ENCODE measurements at regions of chr18 and their contacts with region 1.

Region 1: GRCh38 chr18:37537868-37538525 is 27.6 kb downstream of the CELF4 start:
- DNase-seq: peak; percentile 67 to 91 (median 85)
- H3K4me3 ChIP-seq: no peak overlapping the region
- H3K27ac ChIP-seq: no peak overlapping the region
- H3K4me1 ChIP-seq: no peaks in the 10 kb centered on the region
- H3K27me3 ChIP-seq: peaks cover 9% of the 10 kb centered on the region
- CTCF ChIP-seq: peak; percentile 73

Region 2: DNA sequence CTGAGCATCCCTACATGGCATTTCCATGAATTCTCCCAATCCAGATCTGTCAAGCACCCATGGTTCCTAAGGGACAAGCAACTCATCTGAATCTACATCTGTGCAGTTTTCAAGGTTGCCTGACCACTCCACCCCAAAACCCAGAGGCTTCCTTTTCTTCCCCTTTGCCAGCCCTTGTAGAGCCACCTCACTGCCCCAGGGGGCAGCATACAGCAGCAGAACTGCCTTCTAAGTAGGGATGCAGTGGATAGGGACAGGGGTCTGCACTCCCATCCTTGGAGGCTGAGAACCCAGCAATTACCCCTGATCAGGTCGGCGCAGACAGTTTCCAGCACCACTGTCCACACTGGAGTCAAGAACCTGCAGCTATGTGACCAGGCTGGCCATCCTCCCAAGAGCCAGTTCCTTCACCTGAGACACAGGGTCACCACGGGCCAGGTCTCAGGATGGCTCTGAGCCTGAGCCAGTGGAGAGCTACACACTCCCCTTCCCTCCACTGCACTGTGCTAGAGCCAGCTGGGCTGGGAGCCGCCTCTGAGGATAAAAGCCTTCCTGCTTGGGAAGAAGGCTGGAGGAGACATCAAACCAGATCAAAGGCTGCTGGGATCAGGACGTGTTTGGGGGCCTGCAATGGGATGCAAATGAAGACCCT is 255.5 kb before region 1 on chr18:
- intact Hi-C with region 1: no loop called
- DNase-seq: peak in 1 of 5 donors; percentile 31
- H3K4me3 ChIP-seq: no peak overlapping the region
- H3K27ac ChIP-seq: no peak overlapping the region
- H3K4me1 ChIP-seq: no peaks in the 10 kb centered on the region
- H3K27me3 ChIP-seq: no peaks in the 10 kb centered on the region
- CTCF ChIP-seq: peak; percentile 27

Region 3: DNA sequence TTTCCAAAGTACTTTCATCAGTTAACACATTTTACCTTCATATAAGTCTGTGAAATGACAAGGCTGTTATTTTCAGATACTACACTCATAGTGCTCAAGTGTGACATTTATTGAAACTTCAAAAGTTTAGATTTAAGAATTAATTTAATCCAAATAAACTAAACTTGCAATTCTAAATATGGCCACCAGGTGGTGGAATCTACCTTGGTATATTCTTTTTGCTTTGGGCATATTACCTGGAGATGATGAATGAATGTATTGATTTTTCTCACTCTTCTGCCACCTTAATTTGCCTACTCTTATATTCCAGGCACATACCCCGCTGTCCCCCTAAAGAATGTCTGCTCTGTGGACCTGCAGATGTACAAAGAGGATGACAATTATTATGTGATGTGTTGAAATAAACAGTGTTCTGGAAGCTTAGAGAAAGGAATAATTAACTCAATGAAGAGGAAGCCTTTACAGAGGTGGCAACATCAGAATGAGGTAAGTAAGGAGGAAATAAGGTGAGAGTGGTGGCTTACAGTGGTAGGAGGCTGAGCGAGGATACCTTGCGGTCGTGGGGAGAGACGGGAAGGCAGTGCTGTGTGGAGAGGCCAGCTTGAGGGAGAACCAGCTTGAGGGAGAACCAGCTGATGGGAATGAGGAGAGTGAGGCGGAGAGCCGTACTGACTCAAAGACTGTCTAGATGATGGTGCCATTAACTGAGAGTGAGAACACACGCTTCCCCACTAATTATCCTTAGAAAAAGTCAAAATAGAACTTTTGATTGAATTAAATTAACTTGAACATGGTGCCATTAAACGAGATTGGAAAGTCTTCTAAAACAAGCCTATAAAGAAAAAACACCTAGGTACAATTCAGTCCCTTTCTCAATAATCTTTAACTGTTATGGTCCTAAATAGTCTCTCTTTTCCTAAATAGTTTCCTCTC is 151.9 kb before region 1 on chr18:
- intact Hi-C with region 1: loop called (anchors 2 kb)
- DNase-seq: peak in 2 of 5 donors; percentile 39 to 41
- H3K4me3 ChIP-seq: no peak overlapping the region
- H3K27ac ChIP-seq: no peak overlapping the region
- H3K4me1 ChIP-seq: no peaks in the 10 kb centered on the region
- H3K27me3 ChIP-seq: no peaks in the 10 kb centered on the region
- CTCF ChIP-seq: peak; percentile 62

Region 4: DNA sequence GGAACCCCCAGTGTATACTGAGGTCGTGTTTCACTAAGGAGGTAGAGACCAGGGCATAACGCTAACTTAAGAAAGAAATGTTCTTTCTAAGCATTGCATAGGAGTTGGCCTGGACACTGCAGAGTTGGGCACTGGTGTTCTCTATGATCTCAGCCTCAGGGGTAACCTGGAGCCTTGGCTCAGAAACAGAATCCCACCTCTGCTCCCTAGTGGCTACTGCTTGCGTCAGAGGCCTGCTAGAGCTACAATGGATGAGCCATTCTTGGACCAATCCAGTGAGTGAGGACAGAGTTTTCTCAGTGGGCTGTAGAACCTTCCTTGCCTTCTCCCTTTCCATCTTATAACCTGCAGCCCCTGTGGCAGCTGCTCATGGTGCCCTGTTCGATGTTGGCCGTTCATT is 352.0 kb after region 1 on chr18:
- intact Hi-C with region 1: no loop called
- DNase-seq: no peak
- H3K4me3 ChIP-seq: no peak overlapping the region
- H3K27ac ChIP-seq: no peak overlapping the region
- H3K4me1 ChIP-seq: no peaks in the 10 kb centered on the region
- H3K27me3 ChIP-seq: no peaks in the 10 kb centered on the region
- CTCF ChIP-seq: no peak

Measured in kidney (tissue), 22 donors.